GM18951 (cell line): ENCODE measurements at regions of chr7 and their contacts with region 1.

Region 1: GRCh38 chr7:111741811-111742240 is 179.5 kb upstream of the IMMP2L start:
- POLR2A ChIP-seq: no peak

Region 2: GRCh38 chr7:111098011-111098925 is 643.6 kb before region 1 on chr7:
- in situ Hi-C with region 1: loop called (anchors 25 kb)
- POLR2A ChIP-seq: no peak

Region 3: DNA sequence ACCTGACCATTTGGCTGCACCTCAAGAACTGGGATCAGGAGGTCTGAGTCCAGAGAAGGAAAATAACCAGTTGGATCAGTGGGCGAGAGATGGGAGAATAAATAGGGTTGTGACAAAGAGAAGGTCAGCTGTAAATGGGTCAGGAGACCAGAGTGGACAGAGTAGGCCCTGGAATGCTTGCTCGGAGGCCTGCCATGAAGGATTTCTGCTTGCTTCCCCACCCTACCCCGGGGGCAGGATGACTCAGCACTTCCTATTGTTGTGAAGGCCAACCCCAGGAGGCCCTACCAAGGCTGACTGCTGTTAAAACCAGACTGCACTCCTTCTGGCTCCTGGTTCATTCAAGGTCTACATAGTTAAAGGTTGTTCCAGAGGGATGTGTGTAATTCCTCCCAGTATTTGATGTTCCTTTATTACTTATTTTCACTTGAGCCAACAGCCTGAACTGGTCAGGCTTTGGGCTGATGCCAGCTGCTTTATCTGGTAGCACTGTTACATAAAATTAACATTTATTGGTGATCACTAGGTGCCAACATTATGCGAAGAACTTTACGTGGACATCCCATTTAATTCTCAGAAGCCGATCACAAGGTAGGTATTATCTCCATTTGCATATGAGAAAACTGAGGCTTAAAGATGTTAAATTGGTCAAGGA is 681.1 kb after region 1 on chr7:
- in situ Hi-C with region 1: loop called (anchors 10 kb)
- POLR2A ChIP-seq: no peak